ENCODE measurements at regions of chr6 and their contacts with region 1.

Region 1: GRCh38 chr6:122730775-122731386 is 48.6 kb upstream of the FABP7 start:
- DNase-seq: peak in 1 of 2 experiments; percentile 37
- H3K4me3 ChIP-seq: no peak overlapping the region
- H3K4me3 Mint-ChIP-seq: no peak overlapping the region
- H3K27ac Mint-ChIP-seq: no peak overlapping the region
- H3K4me1 ChIP-seq: peaks cover 9% of the 10 kb centered on the region; the same call in 1 of the 2 replicates
- H3K4me1 Mint-ChIP-seq: peaks cover 15% of the 10 kb centered on the region
- H3K27me3 ChIP-seq: no peaks in the 10 kb centered on the region
- H3K27me3 Mint-ChIP-seq: no peaks in the 10 kb centered on the region
- CTCF ChIP-seq: peak; percentile 59 to 62

Region 2: DNA sequence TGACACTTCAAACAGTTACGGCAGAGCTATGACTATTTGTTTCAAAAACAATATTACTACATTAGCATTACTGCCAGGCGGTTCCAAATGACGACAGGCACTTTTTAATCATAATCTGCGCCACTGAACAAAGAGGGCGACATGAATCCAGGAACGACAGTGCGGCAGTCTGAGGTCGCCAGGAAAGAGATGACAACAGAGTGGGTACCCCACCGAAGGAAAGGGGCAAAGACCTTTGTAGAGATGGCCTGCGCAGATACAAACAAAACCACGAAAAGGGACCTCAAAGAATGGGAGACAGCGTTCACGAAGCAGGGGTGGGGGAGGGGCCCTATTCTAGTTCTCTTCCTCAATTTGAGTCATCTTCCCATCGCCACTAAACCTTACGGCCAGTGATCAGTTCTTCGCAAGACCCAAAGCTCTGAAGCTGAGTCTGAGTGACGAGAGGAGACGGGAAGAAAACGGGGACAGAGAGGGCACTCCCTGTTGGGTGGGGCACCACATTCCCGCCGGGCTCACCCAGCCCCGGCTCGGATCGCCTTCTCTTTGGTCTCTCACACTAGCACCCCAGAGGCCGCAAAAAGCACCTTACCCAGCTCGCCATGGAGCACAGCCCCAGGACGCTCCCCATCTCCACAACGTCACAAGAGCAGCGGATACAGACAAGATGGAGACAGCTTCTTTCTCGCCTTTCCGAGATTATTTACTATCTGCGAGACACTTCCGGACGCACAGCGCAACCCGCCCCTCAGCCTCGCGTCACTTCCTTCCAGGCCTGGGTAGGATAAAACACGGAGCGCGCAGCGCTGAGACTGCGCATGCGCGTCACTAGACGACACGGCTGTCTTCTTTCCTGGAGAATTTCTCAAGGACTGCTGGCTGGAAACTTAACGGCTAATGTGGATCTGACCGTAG is 259.5 kb before region 1 on chr6 and contains the start of gene SERINC1:
- CTCF ChIA-PET with region 1: no interaction called
- POLR2A ChIA-PET with region 1: no interaction called
- intact Hi-C with region 1: loop called (anchors 2 kb)
- DNase-seq: peak; percentile 90 to 93
- H3K4me3 ChIP-seq: peak within 1 kb of the TSS; percentile 92
- H3K4me3 Mint-ChIP-seq: peak within 1 kb of the TSS; percentile 93
- H3K27ac Mint-ChIP-seq: peak within 1 kb of the TSS; percentile 92
- H3K4me1 ChIP-seq: peaks cover 5% of the 10 kb centered on the region; the same call in 1 of the 2 replicates
- H3K4me1 Mint-ChIP-seq: no peaks in the 10 kb centered on the region
- H3K27me3 ChIP-seq: no peaks in the 10 kb centered on the region
- H3K27me3 Mint-ChIP-seq: no peaks in the 10 kb centered on the region
- CTCF ChIP-seq: no peak
- total RNA-seq, gene SERINC1: 70.2 and 72.2 TPM in 2 replicates

Region 3: DNA sequence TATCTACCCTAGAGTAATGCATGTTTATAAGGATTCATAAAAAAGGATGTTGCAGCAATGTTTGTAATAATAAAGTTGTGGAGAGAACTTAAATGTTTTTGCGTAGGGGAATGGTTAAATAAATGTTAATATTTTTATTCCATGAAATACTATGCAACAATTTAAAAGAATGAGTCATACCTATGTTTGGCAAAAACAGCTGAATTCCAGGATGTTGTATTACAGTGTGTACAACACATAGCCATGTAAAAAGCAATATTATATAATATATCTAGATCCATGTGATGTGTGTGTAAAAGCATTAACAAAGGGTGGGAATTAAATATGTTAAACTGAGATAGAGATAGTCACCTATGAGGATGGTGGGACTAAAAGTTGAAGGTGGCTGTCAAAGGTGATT is 141.8 kb before region 1 on chr6:
- CTCF ChIA-PET with region 1: no interaction called
- POLR2A ChIA-PET with region 1: no interaction called
- intact Hi-C with region 1: no loop called
- DNase-seq: no peak
- H3K4me3 ChIP-seq: no peak overlapping the region
- H3K4me3 Mint-ChIP-seq: no peak overlapping the region
- H3K27ac Mint-ChIP-seq: no peak overlapping the region
- H3K4me1 ChIP-seq: no peaks in the 10 kb centered on the region
- H3K4me1 Mint-ChIP-seq: no peaks in the 10 kb centered on the region
- H3K27me3 ChIP-seq: no peaks in the 10 kb centered on the region
- H3K27me3 Mint-ChIP-seq: no peaks in the 10 kb centered on the region
- CTCF ChIP-seq: no peak

Region 4: GRCh38 chr6:122770835-122771601 is 40.1 kb after region 1 on chr6:
- CTCF ChIA-PET with region 1: no interaction called
- POLR2A ChIA-PET with region 1: no interaction called
- intact Hi-C with region 1: loop called (anchors 1 kb)
- DNase-seq: peak; percentile 50 to 59
- H3K4me3 ChIP-seq: no peak overlapping the region
- H3K4me3 Mint-ChIP-seq: peak overlapping the region; percentile 42
- H3K27ac Mint-ChIP-seq: peak overlapping the region; percentile 66
- H3K4me1 ChIP-seq: peaks cover 52% of the 10 kb centered on the region
- H3K4me1 Mint-ChIP-seq: peaks cover 40% of the 10 kb centered on the region
- H3K27me3 ChIP-seq: no peaks in the 10 kb centered on the region
- H3K27me3 Mint-ChIP-seq: no peaks in the 10 kb centered on the region
- CTCF ChIP-seq: peak; percentile 24 to 49

Region 5: DNA sequence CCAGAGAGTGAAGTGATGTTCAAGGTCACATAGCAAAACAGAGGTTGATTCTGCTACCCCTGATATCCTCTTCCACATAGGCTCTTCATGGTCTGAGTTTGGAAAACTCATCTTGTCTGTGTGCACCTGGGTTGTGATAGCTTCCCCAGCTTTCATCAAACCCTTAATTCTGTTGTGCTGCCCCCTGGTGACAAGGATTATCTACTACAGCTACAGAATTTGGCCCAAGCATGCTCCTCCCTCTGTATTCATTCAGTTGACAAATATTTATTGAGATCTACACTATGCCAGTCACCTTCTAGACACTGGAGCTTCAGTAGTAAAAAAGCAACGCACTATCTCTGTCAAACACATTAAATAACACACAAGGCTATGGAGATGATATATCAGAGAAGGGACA is 108.6 kb after region 1 on chr6:
- CTCF ChIA-PET with region 1: interaction called, 51 read pairs
- POLR2A ChIA-PET with region 1: no interaction called
- intact Hi-C with region 1: loop called (anchors 1 kb)
- DNase-seq: peak; percentile 61 to 81
- H3K4me3 ChIP-seq: no peak overlapping the region
- H3K4me3 Mint-ChIP-seq: no peak overlapping the region
- H3K27ac Mint-ChIP-seq: no peak overlapping the region
- H3K4me1 ChIP-seq: peaks cover 9% of the 10 kb centered on the region
- H3K4me1 Mint-ChIP-seq: peaks cover 10% of the 10 kb centered on the region
- H3K27me3 ChIP-seq: no peaks in the 10 kb centered on the region
- H3K27me3 Mint-ChIP-seq: no peaks in the 10 kb centered on the region
- CTCF ChIP-seq: peak; percentile 58 to 68

Region 6: DNA sequence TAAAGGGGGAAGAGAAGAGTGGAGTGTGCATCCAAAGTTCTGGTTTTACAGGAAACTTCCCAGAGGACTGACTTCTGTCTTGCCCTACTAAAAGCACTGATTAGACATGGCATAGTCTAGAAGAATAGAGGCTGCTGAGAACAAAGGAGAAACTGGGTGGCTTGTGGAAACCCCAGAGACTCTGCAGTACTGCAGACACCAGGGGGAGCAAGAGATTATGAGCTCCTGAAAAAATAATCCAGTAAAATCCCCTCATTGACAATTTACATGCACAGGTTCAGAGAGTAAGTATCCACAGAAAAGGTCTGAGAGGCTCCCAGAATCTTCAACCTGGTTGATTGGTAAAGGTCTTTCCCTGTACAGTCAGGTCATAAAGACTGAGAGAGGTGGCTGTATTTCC is 216.5 kb after region 1 on chr6:
- CTCF ChIA-PET with region 1: no interaction called
- POLR2A ChIA-PET with region 1: no interaction called
- intact Hi-C with region 1: no loop called
- DNase-seq: peak in 1 of 2 experiments; percentile 27
- H3K4me3 ChIP-seq: no peak overlapping the region
- H3K4me3 Mint-ChIP-seq: no peak overlapping the region
- H3K27ac Mint-ChIP-seq: no peak overlapping the region
- H3K4me1 ChIP-seq: no peaks in the 10 kb centered on the region
- H3K4me1 Mint-ChIP-seq: no peaks in the 10 kb centered on the region
- H3K27me3 ChIP-seq: no peaks in the 10 kb centered on the region
- H3K27me3 Mint-ChIP-seq: peaks cover 7% of the 10 kb centered on the region
- CTCF ChIP-seq: peak; percentile 26 to 63

Region 7: DNA sequence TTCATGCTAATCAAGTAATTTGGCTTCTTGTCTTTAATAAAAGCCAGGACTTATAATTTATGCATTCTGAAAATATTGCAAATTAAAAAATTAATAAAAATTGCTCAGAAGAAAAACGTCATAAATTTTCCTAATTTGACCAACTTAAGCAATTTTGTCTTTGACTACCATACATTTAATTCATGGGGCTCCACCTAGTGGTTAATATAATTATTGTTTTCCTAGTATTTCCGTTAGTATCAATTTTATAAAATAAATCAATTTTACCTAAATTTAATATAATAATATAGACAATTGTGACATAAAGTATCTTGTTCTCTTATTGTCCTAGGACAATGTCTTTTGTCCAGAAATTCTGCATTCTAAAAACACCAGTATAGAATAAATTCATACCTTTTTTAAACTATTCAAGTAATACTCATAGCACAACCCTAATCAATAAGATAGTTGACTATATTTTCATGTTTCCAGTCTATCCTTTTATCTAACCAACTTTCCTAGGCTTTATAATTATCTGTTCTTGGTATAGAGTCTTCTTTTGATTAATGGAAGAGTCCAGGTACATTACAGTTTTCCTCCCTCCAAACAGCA is 585.9 kb after region 1 on chr6:
- CTCF ChIA-PET with region 1: no interaction called
- POLR2A ChIA-PET with region 1: no interaction called
- intact Hi-C with region 1: loop called (anchors 5 kb)
- DNase-seq: no peak
- H3K4me3 ChIP-seq: no peak overlapping the region
- H3K4me3 Mint-ChIP-seq: no peak overlapping the region
- H3K27ac Mint-ChIP-seq: no peak overlapping the region
- H3K4me1 ChIP-seq: no peaks in the 10 kb centered on the region
- H3K4me1 Mint-ChIP-seq: no peaks in the 10 kb centered on the region
- H3K27me3 ChIP-seq: no peaks in the 10 kb centered on the region
- H3K27me3 Mint-ChIP-seq: peaks cover under 1% of the 10 kb centered on the region
- CTCF ChIP-seq: peak; percentile 15 to 55

Measured in Caco-2 (cell line).